ENCODE measurements at regions of chr15 and their contacts with region 1.

Region 1: DNA sequence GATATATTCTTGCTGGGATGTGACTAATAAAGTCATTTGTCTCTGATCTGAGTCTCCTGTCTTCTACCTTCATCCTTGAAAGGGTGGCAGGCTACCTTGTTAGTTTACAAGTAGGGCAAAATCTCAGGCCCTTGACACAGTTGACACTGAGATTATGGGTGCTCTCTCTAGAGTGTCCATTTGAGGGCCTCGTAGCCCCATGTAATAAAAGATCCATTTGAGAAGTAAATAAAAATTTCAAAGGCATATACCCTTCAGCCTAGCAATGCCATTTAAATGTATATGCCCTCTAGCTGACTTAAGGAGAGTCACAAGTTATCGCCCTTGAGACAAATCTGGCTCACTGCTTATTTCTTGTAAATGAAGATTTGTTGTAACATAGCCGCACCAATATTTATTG is 98.6 kb downstream of the TCF12 start:
- DNase-seq: no peak
- H3K4me3 ChIP-seq: no peak overlapping the region
- H3K27ac ChIP-seq: no peak overlapping the region
- H3K4me1 ChIP-seq: peaks cover 25% of the 10 kb centered on the region
- H3K27me3 ChIP-seq: no peaks in the 10 kb centered on the region
- CTCF ChIP-seq: peak in 1 of 2 donors; percentile 29

Region 2: DNA sequence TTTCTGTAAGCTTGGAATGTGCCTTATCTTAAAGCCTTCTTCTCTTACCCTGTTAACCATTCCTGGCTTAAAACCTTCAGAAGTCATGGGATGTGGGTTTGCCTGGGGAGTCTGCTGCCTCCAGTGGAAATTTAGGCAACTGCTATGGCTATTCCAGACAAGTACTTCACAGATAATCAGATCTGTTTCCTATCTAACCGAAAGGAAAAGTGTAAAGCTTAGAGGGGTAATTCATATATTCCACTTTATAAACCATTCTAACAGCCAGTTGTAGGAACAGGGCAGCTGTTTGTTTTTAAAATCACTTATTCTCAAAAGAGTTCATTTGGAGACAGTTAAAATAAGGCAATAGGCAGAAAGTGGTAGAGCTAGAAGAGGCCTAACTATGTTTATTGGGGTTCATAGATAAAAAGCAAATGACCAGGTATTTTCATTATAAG is 121.3 kb after region 1 on chr15:
- CTCF ChIA-PET with region 1: no interaction called
- dilution Hi-C with region 1: no loop called
- in situ Hi-C with region 1: no loop called
- intact Hi-C with region 1: loop called (anchors 2 kb)
- DNase-seq: peak; percentile 41
- H3K4me3 ChIP-seq: no peak overlapping the region
- H3K27ac ChIP-seq: no peak overlapping the region
- H3K4me1 ChIP-seq: no peaks in the 10 kb centered on the region
- H3K27me3 ChIP-seq: no peaks in the 10 kb centered on the region
- CTCF ChIP-seq: peak; percentile 90 to 93

Region 3: DNA sequence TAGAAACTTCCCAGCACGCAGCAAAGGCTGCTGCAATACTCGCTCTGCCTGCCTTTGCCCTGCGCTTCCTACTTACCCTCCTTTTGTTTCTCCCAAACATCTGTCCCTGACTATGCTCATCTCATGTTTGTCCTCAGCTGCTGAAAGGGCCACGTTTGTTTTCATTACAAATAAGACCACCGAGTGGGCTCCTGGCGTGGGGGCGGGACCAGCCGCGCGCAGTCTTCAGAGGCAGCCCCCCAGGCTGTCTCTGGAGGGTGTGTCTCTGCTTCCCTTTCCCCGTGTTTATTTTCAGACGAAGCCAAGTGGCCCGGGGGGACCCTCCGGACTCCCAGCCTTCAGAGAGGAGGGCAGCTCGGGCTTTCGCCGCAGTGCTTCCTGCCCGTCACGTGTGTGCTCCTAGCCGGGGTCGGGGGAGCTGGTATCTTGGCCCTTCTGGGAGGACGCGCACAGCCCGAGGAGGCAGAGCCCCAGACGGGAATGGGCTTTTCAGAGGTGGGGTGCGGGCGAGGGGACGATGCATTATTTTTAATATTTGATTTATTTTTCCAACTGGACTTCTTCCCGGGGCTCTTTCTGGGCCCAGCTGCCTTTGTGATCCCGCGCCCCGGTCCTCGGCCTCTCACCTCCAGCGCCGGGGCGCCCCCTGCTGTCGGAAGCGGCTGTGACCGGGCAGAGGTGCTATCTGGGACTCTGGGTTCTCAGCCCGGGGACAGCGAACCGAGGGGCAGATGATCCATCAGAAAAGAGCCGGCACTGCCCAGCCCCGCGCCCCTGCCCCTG is 289.3 kb after region 1 on chr15:
- CTCF ChIA-PET with region 1: no interaction called
- dilution Hi-C with region 1: no loop called
- in situ Hi-C with region 1: no loop called
- intact Hi-C with region 1: loop called (anchors 2 kb)
- DNase-seq: peak; percentile 42
- H3K4me3 ChIP-seq: peak overlapping the region; percentile 39 to 53 (median 46)
- H3K27ac ChIP-seq: no peak overlapping the region
- H3K4me1 ChIP-seq: peaks cover 12% of the 10 kb centered on the region
- H3K27me3 ChIP-seq: no peaks in the 10 kb centered on the region
- CTCF ChIP-seq: peak; percentile 55 to 91

Measured in mammary epithelial cell (primary cell).